Calu3 (cell line): ENCODE measurements at regions of chr3 and their contacts with region 1.

Region 1: DNA sequence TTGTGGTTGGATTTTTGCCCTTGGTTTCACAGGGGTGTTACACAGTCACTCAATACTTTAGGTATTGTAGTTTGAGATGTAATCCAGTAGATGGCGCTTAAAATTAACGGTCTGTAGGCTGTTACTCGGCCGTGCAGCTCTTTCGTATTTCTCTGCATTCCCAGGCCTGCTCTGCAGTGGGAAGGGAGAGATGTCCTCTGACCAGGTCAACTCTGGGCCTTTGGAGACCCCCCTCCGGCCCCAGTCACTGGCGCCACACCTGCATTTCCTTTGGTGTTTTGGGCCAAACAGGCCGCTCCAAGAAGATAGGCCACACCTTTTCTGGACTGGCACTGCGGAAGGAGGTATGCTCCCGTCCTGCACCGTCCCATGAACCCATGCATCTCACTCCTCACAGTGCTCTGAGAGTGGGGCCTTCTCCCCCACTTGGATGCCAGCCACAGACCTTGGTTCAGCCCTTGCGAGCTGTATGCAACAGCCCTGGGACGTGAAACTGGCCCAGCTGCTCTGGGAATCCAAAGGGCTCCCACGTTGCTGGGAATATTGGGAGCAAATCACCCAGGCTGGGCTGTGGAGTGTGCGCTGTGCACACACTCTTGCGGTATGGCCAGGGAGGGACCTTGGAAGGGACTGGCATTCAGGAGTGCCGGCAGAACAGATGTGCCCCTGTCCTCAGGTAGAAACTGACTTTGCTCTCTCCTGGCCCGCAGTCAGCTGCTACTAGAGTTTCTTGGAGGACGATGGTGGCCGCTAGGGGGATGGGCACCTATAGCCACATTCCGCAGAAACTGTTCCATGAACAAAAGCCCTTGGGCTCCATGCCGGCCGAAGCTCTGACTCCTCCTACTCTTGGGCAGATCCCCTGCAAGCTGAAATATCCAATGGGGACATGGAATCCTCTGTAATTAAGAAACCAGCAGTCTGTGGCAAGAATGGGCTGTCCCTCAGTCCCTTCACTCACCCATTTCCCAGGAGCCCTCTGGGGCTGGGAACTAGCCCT is 410.5 kb upstream of the CADM2 start:
- DNase-seq: peak; percentile 13
- H3K4me3 Mint-ChIP-seq: no peak overlapping the region
- H3K27ac Mint-ChIP-seq: no peak overlapping the region
- H3K4me1 Mint-ChIP-seq: no peaks in the 10 kb centered on the region
- H3K27me3 Mint-ChIP-seq: no peaks in the 10 kb centered on the region
- CTCF ChIP-seq: peak; percentile 41

Region 2: DNA sequence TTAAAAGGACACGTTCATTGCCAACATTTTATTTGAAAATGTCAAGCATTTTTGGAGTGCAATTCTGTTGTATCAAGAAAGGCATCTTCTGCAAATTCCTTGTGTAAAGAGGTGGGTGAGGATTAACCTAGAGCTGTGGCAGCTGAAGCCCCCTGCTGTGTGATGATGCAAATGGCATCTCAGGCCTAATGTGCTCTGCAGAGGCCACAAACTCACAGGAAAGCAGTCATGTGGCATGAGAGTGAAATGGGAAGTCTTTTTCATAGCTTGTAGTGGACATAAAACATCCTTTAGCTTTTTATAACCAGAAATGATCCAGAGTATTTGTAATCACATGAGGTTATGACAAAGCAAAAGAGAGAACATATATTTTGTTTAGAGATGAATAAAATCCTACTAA is 416.9 kb after region 1 on chr3:
- CTCF ChIA-PET with region 1: no interaction called
- intact Hi-C with region 1: loop called (anchors 2 kb)
- DNase-seq: peak; percentile 47
- H3K4me3 Mint-ChIP-seq: no peak overlapping the region
- H3K27ac Mint-ChIP-seq: no peak overlapping the region
- H3K4me1 Mint-ChIP-seq: peaks cover 3% of the 10 kb centered on the region
- H3K27me3 Mint-ChIP-seq: no peaks in the 10 kb centered on the region
- CTCF ChIP-seq: peak; percentile 42